ENCODE measurements at regions of chr3 and their contacts with region 1.

Region 1: DNA sequence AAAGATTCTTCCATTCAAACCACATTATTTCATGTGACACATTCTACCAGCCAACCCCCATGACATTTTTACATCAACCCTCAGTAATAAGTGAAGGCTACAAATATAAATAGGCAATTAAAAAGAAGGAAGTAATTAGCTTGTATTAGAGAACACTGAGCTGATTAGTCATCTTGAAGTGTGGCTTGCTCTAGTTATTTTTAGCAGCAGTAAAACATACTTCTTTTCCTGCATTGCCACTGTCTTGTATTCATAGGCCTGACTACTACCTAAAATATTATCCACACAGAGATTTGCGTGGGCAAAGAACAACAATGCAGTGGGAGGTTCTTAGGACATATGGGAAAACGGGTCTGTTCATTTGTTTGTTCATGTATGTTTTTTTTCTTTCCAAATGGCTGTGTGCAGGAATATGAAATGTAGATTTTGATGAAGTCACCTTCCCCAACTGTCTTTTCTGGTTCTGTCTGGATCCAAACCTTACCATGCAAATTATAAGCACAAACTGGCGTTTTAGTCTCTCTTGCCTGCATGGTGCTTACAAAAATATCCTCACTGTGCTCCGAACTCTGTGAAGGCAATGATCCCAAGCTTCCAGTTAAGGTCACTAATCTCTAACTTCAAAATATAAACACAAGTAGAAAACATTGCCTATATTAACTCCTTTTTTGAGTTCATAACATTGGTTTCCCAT is 31.5 kb upstream of the TM4SF4 start:
- DNase-seq: peak; percentile 24
- H3K4me3 Mint-ChIP-seq: no peak overlapping the region
- H3K27ac Mint-ChIP-seq: peak overlapping the region; percentile 77
- H3K4me1 Mint-ChIP-seq: peaks cover 42% of the 10 kb centered on the region
- H3K27me3 Mint-ChIP-seq: no peaks in the 10 kb centered on the region
- CTCF ChIP-seq: no peak

Region 2: GRCh38 chr3:149163066-149163465 is 279.9 kb before region 1 on chr3:
- CTCF ChIA-PET with region 1: no interaction called
- intact Hi-C with region 1: no loop called
- DNase-seq: no peak
- H3K4me3 Mint-ChIP-seq: no peak overlapping the region
- H3K27ac Mint-ChIP-seq: no peak overlapping the region
- H3K4me1 Mint-ChIP-seq: no peaks in the 10 kb centered on the region
- H3K27me3 Mint-ChIP-seq: no peaks in the 10 kb centered on the region
- CTCF ChIP-seq: no peak

Region 3: DNA sequence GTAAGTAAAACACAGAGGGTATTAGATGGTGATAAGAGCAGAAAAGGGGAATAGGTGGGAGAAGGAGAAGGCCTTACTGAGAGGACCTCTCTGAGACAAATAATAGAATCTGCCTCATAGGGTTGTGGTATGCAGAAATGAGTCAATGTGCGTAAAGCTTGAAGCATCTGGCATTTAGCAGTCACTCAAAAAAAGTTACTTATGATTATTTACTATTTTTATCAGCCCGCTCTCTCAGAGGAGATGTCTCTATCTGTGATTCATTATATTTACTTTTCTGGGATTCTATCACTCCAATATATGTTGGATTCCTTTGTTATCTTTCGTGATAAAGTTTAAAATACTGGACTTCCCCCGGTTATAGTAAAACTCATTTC is 60.9 kb before region 1 on chr3:
- CTCF ChIA-PET with region 1: no interaction called
- intact Hi-C with region 1: no loop called
- DNase-seq: no peak
- H3K4me3 Mint-ChIP-seq: peak overlapping the region; percentile 18
- H3K27ac Mint-ChIP-seq: peak overlapping the region; percentile 97
- H3K4me1 Mint-ChIP-seq: peaks cover 83% of the 10 kb centered on the region
- H3K27me3 Mint-ChIP-seq: no peaks in the 10 kb centered on the region
- CTCF ChIP-seq: no peak

Region 4: DNA sequence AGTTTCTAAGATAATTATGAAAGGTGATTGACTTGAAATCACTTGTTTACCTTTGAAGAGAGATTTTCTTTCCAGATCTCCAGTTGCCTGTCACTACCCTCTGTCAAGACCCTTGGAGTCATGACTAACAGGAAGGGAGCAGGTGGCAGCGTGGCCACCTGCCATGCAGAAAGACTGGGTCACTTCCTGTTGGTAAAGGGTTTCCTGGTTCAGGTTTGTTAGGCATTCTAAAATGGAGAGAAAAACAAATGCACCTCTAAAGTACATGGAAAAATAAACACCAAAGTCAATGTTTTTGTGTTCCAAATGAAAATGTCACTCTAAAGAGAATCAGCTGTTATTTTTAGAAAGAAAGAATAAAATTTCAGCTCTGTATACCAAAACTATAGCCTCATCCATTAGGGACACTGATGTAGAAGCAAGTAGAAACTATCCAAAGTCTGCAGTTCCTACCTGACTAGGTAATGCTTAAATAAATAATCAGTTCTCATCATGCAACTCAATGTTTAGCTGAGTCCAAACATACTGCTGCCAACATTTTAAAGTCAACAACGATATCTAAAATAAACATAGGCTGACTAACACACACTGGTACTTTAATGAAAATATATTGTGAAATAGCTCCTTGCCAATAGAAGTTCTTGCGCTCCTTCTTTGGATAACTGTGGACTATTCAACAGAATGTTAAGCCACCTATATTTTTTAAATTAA is 41.6 kb before region 1 on chr3:
- CTCF ChIA-PET with region 1: interaction called, 8 read pairs
- intact Hi-C with region 1: loop called (anchors 2 kb)
- DNase-seq: peak; percentile 86
- H3K4me3 Mint-ChIP-seq: peak overlapping the region; percentile 37
- H3K27ac Mint-ChIP-seq: peak overlapping the region; percentile 91
- H3K4me1 Mint-ChIP-seq: peaks cover 84% of the 10 kb centered on the region
- H3K27me3 Mint-ChIP-seq: no peaks in the 10 kb centered on the region
- CTCF ChIP-seq: no peak

Measured in Calu3 (cell line).